ENCODE measurements at regions of chr7 and their contacts with region 1.

Region 1: DNA sequence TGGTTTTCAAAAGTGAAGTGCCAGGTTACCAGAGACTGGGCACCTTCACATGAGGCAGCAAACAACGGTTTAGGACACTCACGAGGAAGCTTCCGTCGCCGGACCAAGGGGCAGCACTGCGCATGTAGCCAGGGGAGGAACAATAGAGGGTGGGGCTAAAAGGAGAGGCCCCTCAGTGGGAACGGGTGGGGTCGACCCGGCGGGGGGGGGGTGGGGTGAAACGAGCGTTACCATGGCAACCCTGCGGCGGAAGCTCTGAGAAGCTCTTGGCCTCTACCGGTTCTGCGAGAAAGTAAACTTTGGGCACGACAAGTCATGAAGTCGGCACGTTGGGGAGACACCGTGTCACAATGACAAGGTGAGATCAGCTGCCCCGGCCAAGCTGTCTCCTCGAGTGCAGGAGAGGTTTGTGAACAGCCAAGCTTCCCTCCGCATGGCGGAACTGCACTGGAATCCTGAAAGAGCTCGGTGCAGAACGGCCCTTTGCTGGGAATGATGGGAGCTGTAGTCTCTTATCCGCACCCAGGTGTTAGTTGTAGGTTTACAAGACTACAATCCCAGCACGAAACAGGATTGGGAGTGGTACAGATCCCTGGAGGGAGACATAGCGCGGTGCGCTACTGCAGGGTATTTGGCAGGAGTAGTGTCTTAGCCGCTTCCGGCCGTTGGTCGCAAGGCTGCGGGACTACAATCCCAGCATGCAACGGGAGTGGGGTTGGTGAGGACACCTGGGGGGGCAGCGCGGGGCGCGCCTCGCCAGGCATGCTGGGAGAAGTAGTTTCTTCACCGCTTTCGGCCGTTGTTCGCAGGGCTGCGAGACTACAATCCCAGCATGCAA is 72.8 kb upstream of the ZNF722 start:
- H3K4me3 Mint-ChIP-seq: peak overlapping the region; percentile 95
- H3K27ac Mint-ChIP-seq: peak overlapping the region; percentile 88
- H3K4me1 Mint-ChIP-seq: peaks cover 6% of the 10 kb centered on the region
- H3K27me3 Mint-ChIP-seq: no peaks in the 10 kb centered on the region

Region 2: GRCh38 chr7:63900394-63901203 is 25.2 kb before region 1 on chr7:
- intact Hi-C with region 1: loop called (anchors 1 kb)
- H3K4me3 Mint-ChIP-seq: peak overlapping the region; percentile 93
- H3K27ac Mint-ChIP-seq: peak overlapping the region; percentile 81
- H3K4me1 Mint-ChIP-seq: peaks cover 21% of the 10 kb centered on the region
- H3K27me3 Mint-ChIP-seq: no peaks in the 10 kb centered on the region

Region 3: GRCh38 chr7:64037095-64037494 is 111.3 kb after region 1 on chr7:
- intact Hi-C with region 1: no loop called
- H3K4me3 Mint-ChIP-seq: no peak overlapping the region
- H3K27ac Mint-ChIP-seq: no peak overlapping the region
- H3K4me1 Mint-ChIP-seq: no peaks in the 10 kb centered on the region
- H3K27me3 Mint-ChIP-seq: no peaks in the 10 kb centered on the region

Region 4: GRCh38 chr7:64223366-64223765 is 297.5 kb after region 1 on chr7:
- intact Hi-C with region 1: no loop called
- H3K4me3 Mint-ChIP-seq: no peak overlapping the region
- H3K27ac Mint-ChIP-seq: no peak overlapping the region
- H3K4me1 Mint-ChIP-seq: no peaks in the 10 kb centered on the region
- H3K27me3 Mint-ChIP-seq: no peaks in the 10 kb centered on the region

Region 5: DNA sequence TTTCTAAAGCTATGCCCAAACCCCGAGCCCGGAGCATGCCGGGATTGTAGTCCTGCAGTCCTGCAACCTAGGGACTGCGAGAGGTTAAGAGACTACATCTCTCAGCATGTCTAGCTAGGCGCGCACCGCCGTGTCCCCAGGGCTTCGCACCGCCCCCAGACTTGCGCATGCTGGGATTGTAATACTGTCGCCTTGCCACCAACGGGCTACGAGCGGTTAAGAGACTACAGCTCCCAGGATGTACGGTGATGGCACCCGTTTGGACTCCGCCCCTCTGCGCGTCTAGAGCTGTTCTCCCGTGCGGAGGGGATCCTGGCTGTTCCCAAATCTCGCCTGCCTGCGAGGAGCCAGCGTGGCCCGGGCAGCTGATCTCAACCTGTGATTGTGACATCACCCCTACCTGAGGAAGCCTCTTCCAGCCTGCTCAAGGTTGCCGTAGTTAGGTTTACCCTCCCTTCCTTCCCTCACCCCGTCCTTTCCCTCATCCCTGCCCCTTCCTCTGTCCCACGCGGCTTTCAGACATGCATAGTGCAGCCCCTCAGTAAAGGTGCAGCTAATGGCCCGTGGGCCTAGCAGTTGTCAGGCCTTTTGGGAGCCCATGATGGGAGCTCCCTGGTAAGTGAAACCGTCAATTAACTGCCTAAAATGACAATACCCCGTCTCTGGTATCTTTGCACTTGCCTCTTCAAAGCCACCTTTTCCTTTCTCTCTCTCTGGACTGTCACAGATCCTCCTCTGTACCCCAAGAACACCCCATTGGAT is 381.6 kb after region 1 on chr7:
- intact Hi-C with region 1: loop called (anchors 5 kb)
- H3K4me3 Mint-ChIP-seq: peak overlapping the region; percentile 99
- H3K27ac Mint-ChIP-seq: peak overlapping the region; percentile 95
- H3K4me1 Mint-ChIP-seq: peaks cover 17% of the 10 kb centered on the region
- H3K27me3 Mint-ChIP-seq: no peaks in the 10 kb centered on the region

Region 6: GRCh38 chr7:64665980-64666662 is 740.3 kb after region 1 on chr7 and contains the start of gene ZNF107:
- intact Hi-C with region 1: loop called (anchors 5 kb)
- H3K4me3 Mint-ChIP-seq: peak within 1 kb of the TSS; percentile 98
- H3K27ac Mint-ChIP-seq: peak within 1 kb of the TSS; percentile 90
- H3K4me1 Mint-ChIP-seq: peaks cover 16% of the 10 kb centered on the region
- H3K27me3 Mint-ChIP-seq: no peaks in the 10 kb centered on the region